Tibial artery (tissue), 4 donors: ENCODE measurements at regions of chr11 and their contacts with region 1.

Region 1: GRCh38 chr11:12963792-12964536 is 45.2 kb upstream of the RASSF10 start:
- DNase-seq: peak; percentile 64 to 68
- H3K4me3 ChIP-seq: no peak overlapping the region
- H3K27ac ChIP-seq: no peak overlapping the region
- H3K4me1 ChIP-seq: peaks cover 0 to 4% (median 0%) of the 10 kb centered on the region in 4 donors
- H3K27me3 ChIP-seq: peaks cover 0 to 10% of the 10 kb centered on the region in 2 donors
- CTCF ChIP-seq: peak; percentile 70 to 74

Region 2: DNA sequence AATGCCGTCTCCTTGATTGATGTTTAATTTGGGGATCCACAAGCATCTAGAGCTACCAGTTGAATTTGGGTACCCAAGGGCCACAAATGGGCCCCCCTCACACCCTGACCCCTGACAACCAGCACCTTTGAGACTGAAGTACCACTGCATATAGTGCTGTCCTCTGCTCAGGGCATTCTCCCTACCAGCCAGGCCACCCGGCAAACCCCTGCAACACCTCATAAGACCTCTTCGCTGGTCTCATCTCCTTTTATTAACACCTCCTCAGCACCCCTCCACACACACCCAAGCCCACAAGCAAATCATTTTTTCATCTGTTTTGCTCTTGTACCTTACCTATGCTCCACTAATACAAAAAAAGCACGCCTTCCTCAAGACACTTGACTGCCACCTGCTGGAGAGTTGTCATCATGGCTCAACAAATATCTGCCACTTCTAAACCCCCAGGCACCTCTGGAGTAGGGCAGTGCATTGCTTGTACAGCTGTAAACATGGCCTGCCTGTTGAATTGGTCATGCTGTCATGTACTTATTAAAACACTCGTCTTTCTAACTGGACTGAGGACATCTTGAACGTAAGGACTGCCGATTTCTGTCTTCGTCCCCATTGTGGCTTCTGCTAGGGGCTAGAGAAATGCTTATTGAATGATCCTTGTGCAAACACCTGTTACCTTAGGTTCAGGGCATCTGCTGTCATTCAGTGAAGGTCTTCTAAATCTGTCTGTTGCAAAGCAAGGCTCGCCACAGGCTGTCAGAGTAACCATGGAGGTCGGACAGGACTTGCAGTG is 380.2 kb after region 1 on chr11:
- intact Hi-C with region 1: loop called (anchors 10 kb)
- DNase-seq: peak; percentile 64 to 79
- H3K4me3 ChIP-seq: no peak overlapping the region
- H3K27ac ChIP-seq: no peak overlapping the region
- H3K4me1 ChIP-seq: peaks cover 0 to 12% (median 10%) of the 10 kb centered on the region in 4 donors
- H3K27me3 ChIP-seq: no peaks in the 10 kb centered on the region
- CTCF ChIP-seq: peak; percentile 78 to 87